ENCODE measurements at regions of chr18 and their contacts with region 1.

Region 1: DNA sequence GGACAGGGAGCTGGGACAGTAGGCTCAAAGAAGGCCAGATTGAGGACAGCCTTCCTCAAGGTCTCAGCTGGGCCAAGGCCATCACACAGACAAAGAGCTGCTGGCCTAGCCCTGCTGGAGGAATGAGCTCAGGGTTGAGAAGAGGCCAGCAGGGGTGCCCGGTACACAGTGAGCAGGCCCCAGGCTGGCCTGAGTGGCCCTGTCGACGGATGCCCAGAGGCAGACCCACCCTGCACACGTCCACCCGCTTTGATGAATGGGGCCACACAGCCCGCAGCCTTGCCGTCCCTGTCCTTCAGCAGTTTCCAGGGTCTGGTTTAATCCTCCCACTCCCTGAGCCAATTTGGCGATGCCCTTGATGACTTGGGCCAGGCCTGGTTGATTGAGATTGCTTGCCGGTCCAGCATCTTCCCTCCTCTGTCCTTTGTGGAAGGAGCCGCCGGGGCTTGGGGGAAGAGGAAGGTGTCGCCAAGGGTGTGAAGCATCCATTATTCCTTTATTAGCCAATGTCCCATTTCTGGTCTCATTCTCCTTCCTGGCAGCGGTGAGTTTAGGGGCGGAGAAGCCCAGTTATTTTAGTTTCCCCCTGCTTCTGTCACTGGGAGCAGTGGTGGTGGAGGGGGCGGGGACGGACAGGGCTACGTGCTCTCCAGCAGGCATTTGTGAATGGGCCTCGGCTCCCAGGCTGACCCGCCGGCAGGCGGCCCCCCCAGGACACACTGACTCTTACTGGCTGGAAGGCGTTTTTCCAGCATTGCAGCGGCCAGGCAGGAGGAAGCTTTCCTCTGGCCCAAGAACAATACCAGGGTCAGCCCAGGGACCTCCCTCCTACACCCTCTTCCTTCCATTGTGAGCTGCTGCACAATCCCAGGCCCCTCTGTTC is 141.7 kb downstream of the CTIF start:
- DNase-seq: peak; percentile 60 to 63
- H3K4me3 ChIP-seq: no peak overlapping the region
- H3K27ac ChIP-seq: peak overlapping the region; percentile 29 to 57
- H3K4me1 ChIP-seq: peaks cover 0 to under 1% of the 10 kb centered on the region in 2 donors
- H3K27me3 ChIP-seq: no peaks in the 10 kb centered on the region
- CTCF ChIP-seq: peak in 2 of 4 experiments; percentile 20 to 25
- POLR2A ChIP-seq: no peak

Region 2: DNA sequence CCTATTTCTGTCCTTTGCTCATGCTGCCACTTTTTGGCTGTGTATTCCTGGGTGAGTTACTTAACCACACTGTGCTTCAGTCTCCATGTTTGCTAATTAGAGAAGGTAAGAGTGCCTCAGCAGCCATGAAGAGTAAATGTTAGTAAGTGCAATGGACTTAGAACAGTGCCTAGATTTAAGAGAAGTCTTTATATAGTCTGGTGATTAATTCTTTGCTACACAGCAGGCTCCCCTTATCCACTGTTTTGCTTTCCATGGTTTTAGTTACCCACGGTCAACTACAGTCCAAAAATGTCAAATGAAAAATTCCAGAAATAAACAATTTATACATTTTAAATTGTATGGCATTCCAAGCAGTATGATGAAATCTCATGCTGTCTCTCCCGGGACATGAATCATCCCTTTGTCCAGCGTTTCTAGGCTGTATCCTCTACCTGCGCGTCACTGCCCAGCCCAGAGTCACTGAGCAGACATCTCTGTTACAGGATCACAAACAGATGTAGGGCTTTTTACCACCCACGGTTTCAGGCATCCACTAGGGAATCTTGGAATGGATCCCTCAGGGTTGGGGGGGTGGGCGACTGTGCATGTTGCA is 50.8 kb before region 1 on chr18:
- intact Hi-C with region 1: loop called (anchors 10 kb)
- DNase-seq: no peak
- H3K4me3 ChIP-seq: no peak overlapping the region
- H3K27ac ChIP-seq: no peak overlapping the region
- H3K4me1 ChIP-seq: no peaks in the 10 kb centered on the region
- H3K27me3 ChIP-seq: no peaks in the 10 kb centered on the region
- CTCF ChIP-seq: no peak
- POLR2A ChIP-seq: no peak

Measured in uterus (tissue), 4 donors.